Posterior vena cava (tissue), 2 donors: ENCODE measurements at regions of chr7 and their contacts with region 1.

Region 1: DNA sequence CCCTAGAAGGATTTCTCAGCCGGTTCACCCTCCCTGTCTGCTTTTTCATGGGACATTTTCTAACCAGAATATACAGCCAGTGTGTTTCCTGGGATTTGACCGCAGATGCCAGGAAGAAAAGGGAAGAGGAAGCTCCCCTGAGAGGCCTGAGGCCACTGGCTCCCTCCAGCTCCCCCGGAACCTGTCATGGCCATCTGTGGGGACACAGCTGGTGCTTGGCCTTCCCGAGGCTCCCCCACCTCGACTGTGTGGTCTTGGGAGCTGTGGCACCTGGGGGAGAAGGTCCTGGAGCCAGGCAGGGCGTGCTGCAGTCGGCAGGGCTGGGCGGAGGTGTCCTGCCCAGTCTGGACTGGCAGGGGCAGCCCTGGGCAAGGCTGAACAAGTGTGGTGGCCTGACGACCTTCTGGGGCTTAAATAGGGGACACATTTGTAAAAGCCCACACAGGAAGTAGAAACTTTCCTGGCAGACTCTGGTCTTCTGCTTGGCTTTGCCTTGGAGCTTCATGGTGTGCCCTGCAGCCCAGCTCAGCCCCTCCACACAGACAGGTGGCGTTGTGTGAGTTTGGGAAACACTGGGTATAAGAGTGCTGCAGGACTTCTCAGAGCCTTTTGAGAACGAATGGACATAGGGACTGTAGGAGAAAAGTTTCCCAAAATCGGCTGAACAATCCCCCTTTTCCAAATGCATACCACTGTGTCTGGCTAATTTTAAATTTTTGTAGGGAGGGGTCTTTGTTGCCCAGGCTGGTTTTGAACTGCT is 6.8 kb downstream of the BRI3 start:
- DNase-seq: no peak

Region 2: DNA sequence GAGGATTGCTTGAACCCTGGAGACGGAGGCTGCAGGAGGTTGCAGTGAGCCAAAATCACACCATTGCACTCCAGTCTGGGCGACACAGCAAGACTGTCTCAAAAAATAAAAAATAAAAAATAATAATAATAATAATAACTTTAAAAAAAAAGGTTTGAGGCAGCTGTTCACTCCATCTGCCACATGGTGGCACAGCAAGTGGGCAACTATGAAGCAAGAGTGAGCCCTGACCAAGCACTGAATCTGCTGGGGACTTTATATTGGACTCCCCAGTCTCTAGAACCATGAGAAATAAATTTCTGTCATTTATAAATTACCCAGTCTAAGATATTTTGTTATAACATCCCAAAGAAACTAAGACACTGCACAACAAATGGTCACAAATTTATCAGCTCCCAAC is 21.4 kb before region 1 on chr7:
- intact Hi-C with region 1: loop called in 1 of 2 experiments (anchors 1 kb)
- DNase-seq: no peak

Region 3: GRCh38 chr7:98641646-98642500 is 353.6 kb after region 1 on chr7:
- intact Hi-C with region 1: no loop called
- DNase-seq: no peak